ENCODE measurements at regions of chr11 and their contacts with region 1.

Region 1: GRCh38 chr11:1852877-1853276 is at the start of gene LSP1:
- DNase-seq: peak; percentile 82
- ATAC-seq: peak; percentile 67
- H3K4me3 Mint-ChIP-seq: peak within 1 kb of the TSS; percentile 97
- H3K27ac Mint-ChIP-seq: peak within 1 kb of the TSS; percentile 98
- H3K4me1 Mint-ChIP-seq: peaks cover 31% of the 10 kb centered on the region
- H3K27me3 Mint-ChIP-seq: peaks cover 11% of the 10 kb centered on the region
- total RNA-seq, gene LSP1: 438 to 453 TPM

Region 2: DNA sequence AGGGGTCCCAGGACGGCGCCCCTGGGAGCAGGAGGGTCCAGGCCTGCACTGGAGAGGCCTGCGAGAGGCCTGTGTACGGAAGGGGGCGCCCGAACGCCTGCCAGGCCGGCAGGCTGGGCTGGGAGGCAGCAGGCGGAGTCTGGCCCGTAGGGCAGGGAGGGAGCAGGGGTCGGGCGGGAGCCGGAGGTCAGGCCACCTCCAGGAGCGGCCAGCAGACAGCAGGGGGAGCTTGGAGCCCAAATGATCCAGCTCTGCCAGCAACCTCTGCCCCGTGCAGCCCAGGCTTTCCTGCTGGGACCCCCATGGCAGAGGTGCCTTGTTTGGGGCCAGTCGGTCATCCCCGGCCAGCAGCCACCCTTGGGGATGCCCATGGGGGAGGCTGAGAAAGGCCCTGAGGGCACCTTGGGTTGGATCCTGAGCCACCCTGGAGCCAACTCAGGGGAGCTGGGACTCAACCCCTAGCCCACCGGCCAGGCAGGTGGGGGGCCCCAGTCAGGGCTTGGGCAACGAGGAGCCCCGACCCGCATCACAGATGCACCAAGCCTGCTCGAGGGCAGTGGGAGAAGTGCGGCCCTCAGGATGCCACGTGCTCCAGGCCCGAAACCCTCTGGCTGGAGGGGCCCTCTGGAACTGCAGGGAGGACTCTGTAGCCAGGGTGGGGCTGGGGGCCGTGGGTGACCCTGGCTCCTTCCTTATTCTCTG is 27.7 kb before region 1 on chr11:
- POLR2A ChIA-PET with region 1: no interaction called
- DNase-seq: peak; percentile 51
- ATAC-seq: no peak
- H3K4me3 Mint-ChIP-seq: no peak overlapping the region
- H3K27ac Mint-ChIP-seq: no peak overlapping the region
- H3K4me1 Mint-ChIP-seq: no peaks in the 10 kb centered on the region
- H3K27me3 Mint-ChIP-seq: peaks cover 7% of the 10 kb centered on the region

Region 3: DNA sequence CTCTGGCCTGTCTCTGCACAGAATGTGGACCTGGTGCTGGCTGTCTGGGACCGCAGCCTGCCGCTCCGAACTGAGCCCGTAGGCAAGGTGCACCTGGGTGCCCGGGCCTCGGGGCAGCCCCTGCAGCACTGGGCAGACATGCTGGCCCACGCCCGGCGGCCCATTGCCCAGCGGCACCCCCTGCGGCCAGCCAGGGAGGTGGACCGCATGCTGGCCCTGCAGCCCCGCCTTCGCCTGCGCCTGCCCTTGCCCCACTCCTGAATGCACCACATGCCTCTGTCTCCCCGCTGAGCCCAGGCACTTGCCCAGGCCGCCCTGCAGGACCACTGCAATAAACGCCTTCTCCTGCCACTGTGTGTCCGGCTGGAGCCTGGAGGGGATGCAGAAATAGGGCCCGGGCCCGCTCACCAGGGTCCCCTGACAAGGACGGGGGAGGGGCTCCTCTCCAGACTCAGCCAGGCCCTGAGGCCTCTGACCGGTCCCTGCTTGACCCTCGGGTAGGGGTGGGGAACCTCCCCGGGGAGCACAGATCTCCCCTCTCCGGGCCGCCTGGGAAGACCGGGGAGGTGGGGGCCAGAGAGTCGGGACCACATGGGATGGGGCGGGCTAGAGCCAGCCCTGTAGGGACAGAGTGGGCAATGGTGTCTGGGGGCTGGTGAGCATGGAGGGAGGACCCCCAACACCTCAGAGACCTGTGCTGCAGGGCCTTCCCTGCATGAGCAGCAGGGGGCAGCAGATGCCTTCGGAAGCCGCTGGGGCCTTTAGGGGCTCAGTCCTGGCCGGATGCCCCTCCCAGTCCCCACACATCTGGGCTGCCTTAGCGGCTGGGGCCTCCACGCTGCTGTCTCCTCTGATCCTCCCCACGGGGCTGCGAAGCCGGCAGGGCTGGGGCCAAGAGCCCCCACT is 15.5 kb before region 1 on chr11:
- POLR2A ChIA-PET with region 1: interaction called, 19 read pairs
- DNase-seq: peak; percentile 90
- ATAC-seq: peak; percentile 92
- H3K4me3 Mint-ChIP-seq: no peak overlapping the region
- H3K27ac Mint-ChIP-seq: no peak overlapping the region
- H3K4me1 Mint-ChIP-seq: peaks cover 6% of the 10 kb centered on the region
- H3K27me3 Mint-ChIP-seq: no peaks in the 10 kb centered on the region

Region 4: DNA sequence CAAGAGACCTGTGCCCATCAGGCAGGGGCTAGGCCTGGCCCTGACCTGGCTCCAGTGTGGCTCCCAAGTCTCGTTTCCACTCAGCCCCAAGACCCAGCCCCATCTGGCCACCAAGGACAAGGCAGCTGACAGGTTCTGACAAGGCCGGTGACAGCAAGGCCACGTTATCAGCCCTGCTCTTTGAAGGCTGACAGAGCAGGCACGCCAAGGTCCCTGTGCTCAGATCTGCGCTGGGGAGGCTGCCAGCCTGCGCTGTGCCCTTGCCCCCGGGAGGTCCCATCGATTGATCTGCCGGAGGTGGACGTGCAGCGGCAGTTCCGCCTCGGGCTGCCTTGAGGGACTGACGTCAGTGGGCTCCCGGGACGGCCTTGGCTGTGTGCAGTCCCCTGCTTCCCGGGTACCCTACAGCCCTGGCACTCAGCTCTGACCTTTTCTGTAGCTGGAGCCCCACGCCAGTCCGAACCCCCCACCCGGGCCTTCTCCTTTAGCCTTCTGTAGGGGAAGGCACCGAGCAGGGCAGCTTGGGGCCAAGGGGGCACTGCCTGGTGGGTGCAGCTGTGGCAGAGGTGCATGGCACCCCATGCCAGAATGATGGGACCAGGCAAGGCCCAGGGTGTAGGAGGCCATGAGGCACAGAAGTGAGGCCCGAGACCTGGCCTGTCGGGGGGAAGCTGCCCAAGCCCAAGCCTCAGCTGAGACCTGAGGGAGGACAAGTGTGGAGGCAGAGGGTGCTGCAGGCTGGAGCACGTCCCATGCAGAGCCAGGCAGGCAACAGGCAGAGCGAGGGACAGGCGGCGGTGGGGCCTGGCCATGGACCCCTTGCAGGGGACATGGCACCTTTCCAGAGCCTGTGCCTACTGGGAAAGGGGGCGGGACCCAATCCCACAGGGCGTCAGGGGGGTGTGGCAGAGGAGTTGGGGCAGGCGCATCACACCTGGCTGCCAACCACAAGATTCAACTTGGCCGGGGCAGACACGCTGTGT is 10.1 kb before region 1 on chr11:
- POLR2A ChIA-PET with region 1: interaction called, 19 read pairs
- DNase-seq: no peak
- ATAC-seq: no peak
- H3K4me3 Mint-ChIP-seq: peak overlapping the region; percentile 77
- H3K27ac Mint-ChIP-seq: peak overlapping the region; percentile 89
- H3K4me1 Mint-ChIP-seq: peaks cover 39% of the 10 kb centered on the region
- H3K27me3 Mint-ChIP-seq: peaks cover 11% of the 10 kb centered on the region

Region 5: GRCh38 chr11:1882519-1883238 is 29.8 kb after region 1 on chr11:
- POLR2A ChIA-PET with region 1: interaction called, 68 read pairs
- DNase-seq: peak; percentile 89
- ATAC-seq: peak; percentile 90
- H3K4me3 Mint-ChIP-seq: no peak overlapping the region
- H3K27ac Mint-ChIP-seq: no peak overlapping the region
- H3K4me1 Mint-ChIP-seq: peaks cover 4% of the 10 kb centered on the region
- H3K27me3 Mint-ChIP-seq: no peaks in the 10 kb centered on the region

Region 6: DNA sequence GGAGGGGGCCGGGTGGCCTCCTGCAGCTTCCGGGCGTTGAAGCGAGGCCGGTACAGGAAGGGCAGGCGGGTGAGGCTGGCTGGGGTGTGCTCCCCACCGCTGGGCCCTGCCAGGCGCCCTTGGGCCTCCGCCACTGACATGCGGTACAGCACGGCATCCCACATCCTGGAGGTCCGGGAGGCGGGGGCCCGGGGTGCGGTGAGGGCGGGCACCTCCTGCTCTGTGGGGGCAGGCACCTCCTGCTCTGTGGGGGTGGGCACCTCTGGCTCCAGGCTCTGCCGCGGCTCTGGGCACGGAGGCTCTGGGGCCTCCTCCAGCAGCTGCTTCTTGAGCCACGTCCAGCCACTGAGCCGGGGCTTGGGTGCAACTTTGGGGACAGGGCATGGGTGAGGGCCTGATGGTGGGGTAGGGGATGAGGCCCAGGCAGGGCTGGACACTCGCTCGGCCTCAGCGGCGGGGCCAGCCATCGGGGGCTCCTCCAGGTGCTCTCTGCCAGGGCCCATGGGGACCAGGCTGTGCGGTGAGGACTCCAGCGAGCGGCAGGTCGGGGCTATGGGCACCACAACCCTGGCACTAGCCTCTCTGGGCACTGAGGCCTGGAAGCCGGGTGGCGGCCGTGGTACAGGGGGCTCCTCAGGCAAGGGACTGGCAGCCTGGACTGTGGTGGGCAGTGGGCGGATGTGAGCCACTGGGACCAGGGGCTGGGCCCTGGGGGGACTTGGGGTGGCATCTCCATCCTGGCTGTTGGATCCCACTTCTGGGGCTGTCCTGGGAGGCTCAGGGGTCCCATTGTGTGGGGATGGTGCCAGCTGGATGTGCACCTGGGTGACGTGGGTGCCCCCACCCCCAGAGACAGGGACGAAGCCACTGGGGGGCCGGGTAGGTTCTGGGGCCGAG is 36.6 kb after region 1 on chr11:
- POLR2A ChIA-PET with region 1: interaction called, 68 read pairs
- DNase-seq: peak; percentile 85
- ATAC-seq: peak; percentile 85
- H3K4me3 Mint-ChIP-seq: peak overlapping the region; percentile 76
- H3K27ac Mint-ChIP-seq: peak overlapping the region; percentile 90
- H3K4me1 Mint-ChIP-seq: peaks cover 34% of the 10 kb centered on the region
- H3K27me3 Mint-ChIP-seq: no peaks in the 10 kb centered on the region

Region 7: GRCh38 chr11:1946812-1947484 is 94.1 kb after region 1 on chr11 and contains the start of gene MRPL23:
- POLR2A ChIA-PET with region 1: interaction called, 10 read pairs
- DNase-seq: peak; percentile 54
- ATAC-seq: peak; percentile 72
- H3K4me3 Mint-ChIP-seq: no peak within 1 kb of the TSS
- H3K27ac Mint-ChIP-seq: no peak within 1 kb of the TSS
- H3K4me1 Mint-ChIP-seq: no peaks in the 10 kb centered on the region
- H3K27me3 Mint-ChIP-seq: no peaks in the 10 kb centered on the region
- total RNA-seq, gene MRPL23: 76.2 to 77.7 TPM

Measured in activated naive CD8-positive, alpha-beta T cell treated with anti-CD3 and anti-CD28 coated beads, Interleukin-2, amount 10 ng/mL, durations not matched to agents 7 days and 5 days (primary cell).